Colonic mucosa (tissue), 4 donors: ENCODE measurements at regions of chr10 and their contacts with region 1.

Region 1: DNA sequence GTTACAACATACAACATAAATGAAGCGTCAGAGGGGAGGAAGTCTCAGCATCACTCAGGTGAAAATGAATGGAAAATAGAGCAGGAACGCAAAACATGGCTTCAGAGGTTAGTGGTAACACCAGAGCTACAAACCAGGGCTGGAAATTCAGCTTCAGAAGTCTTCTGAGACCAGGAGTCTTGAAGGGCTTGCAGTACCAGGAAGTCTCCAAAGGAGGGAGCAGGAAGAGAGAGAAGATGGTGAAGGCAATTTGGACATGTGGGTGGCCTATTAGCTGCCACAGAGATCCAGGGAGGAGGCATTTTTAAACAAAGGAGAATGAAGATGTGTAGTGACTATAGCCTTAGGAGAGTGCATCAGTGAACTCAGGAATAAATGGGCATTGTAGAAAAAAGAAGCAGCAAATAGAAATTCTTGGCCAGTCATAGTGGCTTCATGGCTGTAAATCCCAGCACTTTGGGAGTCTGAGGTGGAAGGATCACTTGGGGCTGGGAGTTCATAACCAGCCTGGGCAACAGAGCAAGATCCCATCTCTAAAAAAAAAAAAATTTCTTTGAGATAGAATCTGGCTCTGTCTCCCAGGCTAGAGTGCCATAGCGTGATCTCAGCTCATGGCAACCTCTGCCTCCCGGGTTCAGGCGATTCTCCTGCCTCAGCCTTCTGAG is 9.3 kb upstream of the TET1 start:
- DNase-seq: peak; percentile 60
- H3K4me3 ChIP-seq: no peak overlapping the region
- H3K27ac ChIP-seq: no peak overlapping the region
- H3K4me1 ChIP-seq: no peaks in the 10 kb centered on the region
- H3K27me3 ChIP-seq: no peaks in the 10 kb centered on the region
- CTCF ChIP-seq: peak; percentile 77

Region 2: DNA sequence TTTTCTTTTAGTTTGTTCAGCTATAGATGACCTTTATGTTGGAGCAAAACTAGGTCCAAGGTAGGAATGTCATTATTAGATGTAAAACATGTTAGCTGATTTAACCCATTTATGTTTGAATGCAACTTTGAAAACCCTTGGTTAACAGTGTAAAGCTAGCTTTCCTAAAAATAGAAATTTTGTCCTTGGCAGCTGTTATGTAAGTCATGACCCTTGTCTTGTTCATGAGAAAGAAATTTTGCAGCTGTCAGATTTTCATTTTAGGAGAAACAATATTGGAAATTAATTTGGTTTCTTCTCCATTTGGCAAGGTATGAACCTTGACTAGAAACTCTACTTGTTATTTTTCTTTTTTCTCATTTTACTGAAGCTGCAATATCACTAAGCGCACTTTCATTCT is 146.2 kb after region 1 on chr10:
- intact Hi-C with region 1: no loop called
- DNase-seq: no peak
- H3K4me3 ChIP-seq: no peak overlapping the region
- H3K27ac ChIP-seq: no peak overlapping the region
- H3K4me1 ChIP-seq: no peaks in the 10 kb centered on the region
- H3K27me3 ChIP-seq: no peaks in the 10 kb centered on the region
- CTCF ChIP-seq: no peak

Region 3: DNA sequence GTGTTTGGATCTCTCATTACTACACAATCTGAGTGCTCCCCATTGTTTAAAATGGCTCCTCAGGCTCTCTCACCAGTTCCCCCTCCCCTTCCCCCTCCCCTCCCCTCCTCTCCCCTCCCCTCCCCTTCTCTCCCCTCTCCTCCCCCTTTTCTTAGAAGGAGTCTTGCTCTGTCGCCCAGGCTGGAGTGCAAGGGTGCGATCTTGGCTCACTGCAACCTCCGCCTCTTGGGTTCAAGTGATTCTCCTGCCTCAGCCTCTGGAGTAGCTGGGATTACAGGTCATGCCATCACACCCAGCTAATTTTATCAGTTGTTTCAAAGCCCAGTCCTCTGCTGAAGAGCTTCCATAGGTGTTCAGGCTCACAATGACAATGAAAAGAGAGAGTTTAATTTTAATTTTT is 166.6 kb after region 1 on chr10:
- intact Hi-C with region 1: loop called (anchors 10 kb)
- DNase-seq: no peak
- H3K4me3 ChIP-seq: no peak overlapping the region
- H3K27ac ChIP-seq: no peak overlapping the region
- H3K4me1 ChIP-seq: peaks cover 3% of the 10 kb centered on the region
- H3K27me3 ChIP-seq: no peaks in the 10 kb centered on the region
- CTCF ChIP-seq: no peak